ENCODE measurements at regions of chr18 and their contacts with region 1.

Region 1: GRCh38 chr18:34031814-34032213 is 192.9 kb downstream of the NOL4 start:
- DNase-seq: no peak
- H3K4me3 ChIP-seq: no peak overlapping the region
- CTCF ChIP-seq: no peak

Region 2: GRCh38 chr18:33987206-33987605 is 44.6 kb before region 1 on chr18:
- in situ Hi-C with region 1: no loop called
- DNase-seq: no peak
- H3K4me3 ChIP-seq: no peak overlapping the region
- CTCF ChIP-seq: no peak

Region 3: GRCh38 chr18:34077599-34077998 is 45.8 kb after region 1 on chr18:
- in situ Hi-C with region 1: no loop called
- DNase-seq: no peak
- H3K4me3 ChIP-seq: no peak overlapping the region
- CTCF ChIP-seq: no peak

Region 4: DNA sequence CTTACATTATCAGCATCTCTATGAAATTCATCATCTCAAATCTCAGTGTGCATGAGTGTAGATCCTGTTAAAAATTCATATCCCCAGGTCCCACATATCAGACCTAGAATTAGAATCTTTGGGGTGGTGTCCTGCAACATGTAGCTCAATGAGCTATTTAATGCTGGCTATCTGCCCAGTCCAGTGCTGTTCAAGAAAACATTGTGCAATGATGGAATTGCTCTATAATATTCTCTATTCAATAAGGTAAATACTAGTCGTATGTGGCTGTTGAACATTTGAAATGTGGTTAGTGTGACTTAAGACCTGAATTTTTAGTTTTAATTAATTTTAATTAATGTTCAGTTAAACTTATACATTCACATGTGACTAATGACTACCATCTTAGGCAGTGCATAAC is 65.5 kb after region 1 on chr18:
- in situ Hi-C with region 1: loop called (anchors 5 kb)
- DNase-seq: no peak
- H3K4me3 ChIP-seq: no peak overlapping the region
- CTCF ChIP-seq: no peak

Measured in astrocyte of the cerebellum (primary cell).